Sigmoid colon (tissue), 7 donors: ENCODE measurements at regions of chr11 and their contacts with region 1.

Region 1: GRCh38 chr11:126029805-126030204 is 32.9 kb downstream of the CDON start:
- DNase-seq: no peak
- H3K4me3 ChIP-seq: no peak overlapping the region
- H3K27ac ChIP-seq: peak overlapping the region in 3 of 4 donors; percentile 11 to 16 (median 11)
- H3K4me1 ChIP-seq: peaks cover 0 to 74% (median 54%) of the 10 kb centered on the region in 4 donors
- H3K27me3 ChIP-seq: no peaks in the 10 kb centered on the region
- CTCF ChIP-seq: no peak
- EP300 ChIP-seq: no peak
- POLR2A ChIP-seq: no peak

Region 2: DNA sequence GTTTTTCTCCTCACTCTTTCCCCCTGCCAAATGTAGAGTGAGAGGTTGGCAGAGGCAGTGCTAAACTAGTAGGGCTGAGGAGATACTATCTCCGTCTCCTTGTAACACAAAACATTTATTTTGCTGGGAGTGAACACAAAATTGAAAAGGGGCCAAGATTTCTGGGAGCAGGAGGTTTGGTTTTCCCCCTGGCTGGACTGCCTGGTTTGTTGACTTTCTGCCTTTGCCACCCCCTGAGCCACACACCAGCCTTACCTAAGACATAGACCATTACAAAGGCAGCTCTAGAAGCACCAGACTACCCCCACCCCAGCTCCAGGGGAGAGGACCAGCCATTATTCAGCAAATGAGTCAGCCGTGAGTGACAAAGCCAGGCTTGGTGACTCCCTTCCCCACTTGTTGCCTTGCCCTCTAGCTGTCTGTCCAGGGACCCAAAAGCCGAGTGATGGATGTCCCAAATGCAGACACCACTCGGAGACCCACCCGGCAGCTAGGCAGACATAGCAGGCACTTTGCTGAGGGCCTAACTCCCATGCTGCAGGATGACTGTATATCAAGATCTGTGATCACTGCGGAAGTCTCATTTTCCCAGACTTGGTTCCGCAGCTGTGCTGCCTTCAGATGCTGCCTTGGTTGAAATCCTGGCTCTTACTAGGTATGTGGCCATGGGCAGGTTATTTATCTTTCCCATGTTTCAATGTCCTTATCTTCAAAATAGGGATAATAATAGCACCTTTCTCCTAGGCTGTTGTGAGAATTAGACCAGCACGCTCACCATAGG is 50.5 kb after region 1 on chr11:
- intact Hi-C with region 1: no loop called
- DNase-seq: no peak
- H3K4me3 ChIP-seq: no peak overlapping the region
- H3K27ac ChIP-seq: peak overlapping the region in 3 of 4 donors; percentile 73 to 78 (median 77)
- H3K4me1 ChIP-seq: peaks cover 0 to 42% (median 30%) of the 10 kb centered on the region in 4 donors
- H3K27me3 ChIP-seq: no peaks in the 10 kb centered on the region
- CTCF ChIP-seq: no peak
- EP300 ChIP-seq: no peak
- POLR2A ChIP-seq: no peak

Region 3: DNA sequence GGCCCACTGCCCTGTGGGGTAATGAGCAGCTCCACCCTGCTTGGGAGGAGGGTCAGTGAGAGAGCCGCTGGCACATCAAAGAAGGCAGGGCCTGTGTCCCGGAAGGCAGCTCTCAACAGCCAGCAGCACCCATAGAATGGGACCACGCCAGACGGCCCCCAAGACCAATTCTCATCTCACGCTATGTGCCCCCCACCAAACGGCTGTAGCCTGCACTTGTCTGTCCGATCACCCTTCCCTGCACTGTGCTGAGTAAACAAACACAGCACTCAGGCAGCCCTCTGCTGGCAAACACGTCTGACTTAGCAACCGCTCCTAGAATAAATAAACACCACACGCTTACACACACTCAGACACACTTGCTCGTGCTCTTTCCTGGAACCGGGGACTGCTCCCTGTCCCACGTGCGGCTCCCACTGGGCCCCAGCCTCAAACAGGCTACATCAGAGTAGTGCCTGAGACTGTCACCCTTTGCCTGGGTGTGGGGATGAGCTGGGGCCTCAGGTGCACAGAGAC is 86.1 kb after region 1 on chr11:
- intact Hi-C with region 1: loop called (anchors 5 kb)
- DNase-seq: peak; percentile 92
- H3K4me3 ChIP-seq: no peak overlapping the region
- H3K27ac ChIP-seq: peak overlapping the region; percentile 85 to 91 (median 89)
- H3K4me1 ChIP-seq: peaks cover 0 to 63% (median 60%) of the 10 kb centered on the region in 4 donors
- H3K27me3 ChIP-seq: no peaks in the 10 kb centered on the region
- CTCF ChIP-seq: peak in 3 of 4 experiments; percentile 8 to 33 (median 28)
- EP300 ChIP-seq: peak in 2 of 4 donors; percentile 74 to 77
- POLR2A ChIP-seq: no peak

Region 4: DNA sequence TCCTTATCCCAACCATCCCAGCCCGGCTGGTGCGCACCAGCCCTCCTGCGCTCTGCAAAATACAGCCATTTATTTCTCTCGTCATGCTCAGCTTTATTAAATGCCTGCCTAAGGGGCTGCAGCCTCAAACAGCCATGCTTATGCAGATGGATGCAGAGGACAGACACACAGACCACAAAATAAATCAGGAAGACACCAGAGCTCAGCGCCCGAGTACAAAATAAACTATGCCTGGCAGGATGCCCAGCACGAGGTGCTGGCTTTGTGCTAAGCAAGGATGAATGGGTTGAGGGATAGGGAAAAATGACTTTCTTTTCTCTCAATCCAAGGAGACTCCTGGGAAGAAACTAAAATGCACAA is 111.1 kb after region 1 on chr11:
- intact Hi-C with region 1: loop called (anchors 5 kb)
- DNase-seq: peak; percentile 94
- H3K4me3 ChIP-seq: peak overlapping the region in 2 of 4 donors; percentile 5 to 19
- H3K27ac ChIP-seq: peak overlapping the region; percentile 69 to 91 (median 88)
- H3K4me1 ChIP-seq: peaks cover 0 to 66% (median 58%) of the 10 kb centered on the region in 4 donors
- H3K27me3 ChIP-seq: no peaks in the 10 kb centered on the region
- CTCF ChIP-seq: no peak
- EP300 ChIP-seq: peak in 3 of 4 donors; percentile 56 to 69 (median 69)
- POLR2A ChIP-seq: no peak

Region 5: DNA sequence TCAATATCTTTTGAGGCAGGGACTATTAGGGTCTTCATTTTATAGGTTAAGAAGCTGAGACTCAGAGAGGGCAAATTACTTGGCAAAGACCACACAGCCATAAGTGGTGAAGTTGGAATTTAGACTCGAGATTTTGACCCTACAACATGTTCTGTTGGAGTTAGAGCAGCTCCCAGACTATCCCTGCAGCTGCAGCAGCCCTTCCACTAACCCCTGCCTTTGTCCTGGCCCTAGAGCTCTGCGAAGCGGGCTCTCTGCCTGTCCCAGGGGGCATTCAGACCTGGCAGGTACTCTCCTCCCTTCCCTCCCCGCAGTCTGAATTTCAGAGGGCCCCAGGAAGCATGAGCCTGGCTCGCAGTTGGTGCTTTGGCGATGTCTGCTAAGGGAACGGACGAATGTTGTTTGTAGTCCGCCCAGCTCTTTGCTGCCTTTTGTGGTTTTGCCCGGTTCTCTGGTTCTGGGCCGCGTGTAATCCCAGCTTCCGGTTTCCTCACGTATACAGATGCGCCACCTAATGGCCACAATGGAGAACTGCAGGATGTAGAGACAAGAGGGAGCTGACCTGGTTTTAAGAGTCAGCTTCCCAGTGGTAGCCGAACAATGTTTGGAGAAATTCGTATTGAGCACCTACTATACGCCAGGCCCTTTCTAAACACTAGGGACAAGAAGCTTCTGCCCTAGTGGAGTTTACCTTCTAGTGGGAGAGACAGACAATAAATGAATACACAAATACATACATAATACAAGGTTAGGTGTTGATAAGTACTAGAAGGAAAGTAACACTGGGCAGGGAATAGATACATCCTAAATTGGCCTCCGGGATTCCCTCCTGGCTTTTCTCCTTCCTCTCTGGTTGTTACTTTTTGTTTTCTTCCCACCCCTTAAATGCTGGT is 450.9 kb after region 1 on chr11:
- intact Hi-C with region 1: no loop called
- DNase-seq: peak; percentile 93
- H3K4me3 ChIP-seq: peak overlapping the region in 1 of 4 donors; percentile 6
- H3K27ac ChIP-seq: peak overlapping the region; percentile 70 to 78 (median 74)
- H3K4me1 ChIP-seq: peaks cover 0 to 25% (median 11%) of the 10 kb centered on the region in 4 donors
- H3K27me3 ChIP-seq: no peaks in the 10 kb centered on the region
- CTCF ChIP-seq: peak; percentile 89 to 95 (median 94)
- EP300 ChIP-seq: no peak
- POLR2A ChIP-seq: no peak